ENCODE measurements at regions of chr2 and their contacts with region 1.

Region 1: DNA sequence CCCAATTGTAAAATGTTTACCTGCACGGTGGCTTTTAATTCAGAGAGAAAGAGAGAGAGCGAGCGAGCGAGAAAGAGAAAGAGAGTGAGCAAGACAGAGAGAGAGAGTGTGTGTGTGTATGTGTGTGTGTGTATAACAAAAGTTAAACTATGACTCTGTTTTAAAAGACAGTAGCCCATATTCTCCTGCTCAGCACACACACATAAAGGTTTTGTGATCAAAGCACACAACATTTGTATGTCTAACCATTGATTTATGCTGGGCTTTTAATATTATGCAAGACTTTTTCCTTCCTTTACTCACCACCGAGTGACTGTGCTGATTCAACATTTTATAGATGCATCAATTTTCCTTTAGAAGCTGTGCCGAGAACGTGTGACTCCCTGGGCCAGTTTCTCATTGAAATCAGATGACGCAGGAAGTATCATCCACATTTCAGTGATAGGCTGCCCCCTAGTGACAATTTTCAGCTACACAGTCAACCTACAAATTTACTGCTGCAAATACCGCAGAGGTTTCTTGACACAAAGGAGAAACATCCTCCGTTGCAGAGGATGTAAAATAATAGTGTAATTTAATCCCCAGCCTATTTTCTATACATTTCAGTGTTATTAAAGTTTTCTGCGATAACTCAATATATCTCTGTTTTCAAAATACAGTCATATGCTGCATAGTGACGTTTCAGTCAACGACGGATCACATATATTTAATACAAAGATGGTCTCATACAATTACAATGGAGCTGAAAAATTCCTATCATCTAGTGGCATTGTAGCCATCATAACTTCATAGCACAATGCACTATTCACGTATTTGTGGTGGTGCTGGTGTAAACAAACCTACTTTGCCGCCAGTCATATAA is 165.9 kb upstream of the TANK start:
- DNase-seq: peak; percentile 39 to 85 (median 71)
- ATAC-seq: peak; percentile 96
- H3K4me3 ChIP-seq: no peak overlapping the region
- H3K4me3 Mint-ChIP-seq: peak overlapping the region; percentile 40
- H3K27ac ChIP-seq: no peak overlapping the region
- H3K27ac Mint-ChIP-seq: peak overlapping the region; percentile 15
- H3K4me1 ChIP-seq: no peaks in the 10 kb centered on the region
- H3K4me1 Mint-ChIP-seq: peaks cover 10% of the 10 kb centered on the region
- H3K27me3 ChIP-seq: no peaks in the 10 kb centered on the region
- H3K27me3 Mint-ChIP-seq: no peaks in the 10 kb centered on the region
- CTCF ChIP-seq: peak; percentile 86

Region 2: GRCh38 chr2:160109936-160110673 is 884.3 kb before region 1 on chr2:
- CTCF ChIA-PET with region 1: interaction called, 35 read pairs
- POLR2A ChIA-PET with region 1: no interaction called
- intact Hi-C with region 1: loop called (anchors 1 kb)
- DNase-seq: peak in 8 of 9 experiments; percentile 9 to 72 (median 46)
- ATAC-seq: peak; percentile 64
- H3K4me3 ChIP-seq: no peak overlapping the region
- H3K4me3 Mint-ChIP-seq: no peak overlapping the region
- H3K27ac ChIP-seq: no peak overlapping the region
- H3K27ac Mint-ChIP-seq: no peak overlapping the region
- H3K4me1 ChIP-seq: no peaks in the 10 kb centered on the region
- H3K4me1 Mint-ChIP-seq: no peaks in the 10 kb centered on the region
- H3K27me3 ChIP-seq: no peaks in the 10 kb centered on the region
- H3K27me3 Mint-ChIP-seq: peaks cover 12% of the 10 kb centered on the region
- CTCF ChIP-seq: peak; percentile 86

Region 3: DNA sequence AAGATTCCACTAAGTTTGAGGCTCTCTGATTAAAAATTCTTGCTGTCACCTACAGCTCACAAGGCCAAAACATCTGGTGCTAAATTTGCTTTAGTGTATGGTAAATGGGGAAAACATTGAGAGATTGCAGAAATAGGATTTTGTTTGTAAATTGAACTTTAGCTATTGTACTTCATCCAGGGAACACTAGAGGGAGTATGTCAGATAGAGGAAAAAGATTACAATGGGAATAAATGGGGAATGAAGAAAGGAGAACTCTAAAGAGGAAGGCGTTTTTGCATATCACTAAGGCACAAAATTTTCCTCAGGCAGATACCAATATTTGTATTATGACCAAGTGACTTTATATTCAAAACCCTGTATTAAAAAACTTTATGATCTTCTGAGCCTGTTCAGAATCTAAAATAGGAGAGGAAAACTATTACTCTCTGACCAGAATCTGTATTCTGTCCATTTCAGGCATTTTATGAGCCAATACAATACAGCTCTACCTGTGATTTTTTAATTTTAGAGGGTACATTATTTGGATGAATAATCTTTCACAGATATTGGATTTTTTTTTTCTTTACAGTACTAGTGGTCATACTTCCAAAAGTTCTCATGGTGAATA is 742.0 kb before region 1 on chr2:
- CTCF ChIA-PET with region 1: interaction called, 95 read pairs
- POLR2A ChIA-PET with region 1: interaction called, 4 read pairs
- intact Hi-C with region 1: loop called (anchors 1 kb)
- DNase-seq: peak in 2 of 9 experiments; percentile 36 to 46
- ATAC-seq: no peak
- H3K4me3 ChIP-seq: no peak overlapping the region
- H3K4me3 Mint-ChIP-seq: no peak overlapping the region
- H3K27ac ChIP-seq: no peak overlapping the region
- H3K27ac Mint-ChIP-seq: no peak overlapping the region
- H3K4me1 ChIP-seq: no peaks in the 10 kb centered on the region
- H3K4me1 Mint-ChIP-seq: no peaks in the 10 kb centered on the region
- H3K27me3 ChIP-seq: peaks cover 0 to 3% of the 10 kb centered on the region in 2 experiments
- H3K27me3 Mint-ChIP-seq: peaks cover 4% of the 10 kb centered on the region
- CTCF ChIP-seq: peak; percentile 98

Region 4: GRCh38 chr2:160317181-160318099 is 676.9 kb before region 1 on chr2:
- CTCF ChIA-PET with region 1: interaction called, 26 read pairs
- POLR2A ChIA-PET with region 1: no interaction called
- intact Hi-C with region 1: no loop called
- DNase-seq: no peak
- ATAC-seq: no peak
- H3K4me3 ChIP-seq: no peak overlapping the region
- H3K4me3 Mint-ChIP-seq: no peak overlapping the region
- H3K27ac ChIP-seq: no peak overlapping the region
- H3K27ac Mint-ChIP-seq: no peak overlapping the region
- H3K4me1 ChIP-seq: peaks cover 27% of the 10 kb centered on the region
- H3K4me1 Mint-ChIP-seq: peaks cover 64% of the 10 kb centered on the region
- H3K27me3 ChIP-seq: no peaks in the 10 kb centered on the region
- H3K27me3 Mint-ChIP-seq: no peaks in the 10 kb centered on the region
- CTCF ChIP-seq: no peak

Region 5: DNA sequence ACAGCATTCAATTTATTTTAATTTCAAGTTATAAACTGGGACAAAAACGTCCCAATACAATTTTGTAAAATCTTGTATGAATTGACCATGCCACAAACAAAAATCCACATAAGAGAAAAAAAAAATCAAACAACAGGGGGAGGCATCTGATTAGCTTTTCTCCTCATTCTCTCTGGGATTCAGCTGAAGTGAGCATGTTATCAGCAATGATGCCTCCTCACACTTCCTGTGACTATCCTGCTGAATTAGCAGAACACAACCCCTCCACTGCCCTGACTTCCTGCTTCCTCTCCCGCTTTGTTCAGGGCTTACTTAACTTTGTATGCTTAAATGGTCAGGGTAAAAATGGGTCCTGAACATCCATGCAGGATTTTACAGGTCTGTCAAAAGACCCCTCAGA is 662.1 kb before region 1 on chr2:
- CTCF ChIA-PET with region 1: interaction called, 15 read pairs
- POLR2A ChIA-PET with region 1: no interaction called
- intact Hi-C with region 1: no loop called
- DNase-seq: peak in 3 of 9 experiments; percentile 13 to 55 (median 31)
- ATAC-seq: peak; percentile 42
- H3K4me3 ChIP-seq: no peak overlapping the region
- H3K4me3 Mint-ChIP-seq: peak overlapping the region; percentile 7
- H3K27ac ChIP-seq: no peak overlapping the region
- H3K27ac Mint-ChIP-seq: peak overlapping the region; percentile 77
- H3K4me1 ChIP-seq: peaks cover 74% of the 10 kb centered on the region
- H3K4me1 Mint-ChIP-seq: peaks cover 91% of the 10 kb centered on the region
- H3K27me3 ChIP-seq: no peaks in the 10 kb centered on the region
- H3K27me3 Mint-ChIP-seq: no peaks in the 10 kb centered on the region
- CTCF ChIP-seq: no peak

Region 6: DNA sequence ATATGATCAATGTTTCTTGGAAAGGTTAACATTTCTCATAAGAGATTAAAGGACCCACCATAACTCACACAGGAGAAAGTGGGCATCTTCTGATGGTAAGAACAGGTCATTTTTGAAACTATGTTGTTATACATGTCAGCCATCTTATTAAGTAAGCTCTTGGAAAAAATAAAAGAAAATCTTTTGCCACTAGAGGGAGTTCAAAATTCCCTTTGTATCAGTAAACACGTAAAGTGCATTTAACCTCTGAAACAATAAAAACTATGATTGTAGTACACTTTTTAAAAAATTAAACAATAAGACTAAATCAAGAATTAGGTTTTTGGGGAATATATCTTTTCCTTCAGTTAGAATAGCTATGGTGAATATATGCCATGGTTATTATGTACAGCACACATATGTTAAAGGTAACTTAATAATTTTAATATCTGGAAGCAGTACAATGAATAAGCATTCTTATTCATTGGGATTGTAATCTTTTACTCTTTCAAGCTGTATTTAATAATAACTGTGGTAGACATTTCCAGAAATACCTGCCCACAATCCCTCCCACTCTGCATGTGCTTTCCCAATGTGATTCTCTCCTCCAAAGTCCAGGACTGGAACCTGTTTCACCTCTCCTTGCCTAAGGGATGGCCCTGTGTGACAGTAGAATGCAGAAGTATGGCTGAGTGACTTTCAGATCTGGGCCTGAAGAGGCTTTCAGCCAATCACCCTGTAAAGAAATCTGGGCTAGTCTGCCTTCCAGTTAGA is 564.9 kb before region 1 on chr2:
- CTCF ChIA-PET with region 1: interaction called, 6 read pairs
- POLR2A ChIA-PET with region 1: no interaction called
- intact Hi-C with region 1: loop called in 1 of 2 experiments (anchors 10 kb)
- DNase-seq: peak in 2 of 9 experiments; percentile 72 to 81
- ATAC-seq: peak; percentile 53
- H3K4me3 ChIP-seq: no peak overlapping the region
- H3K4me3 Mint-ChIP-seq: peak overlapping the region; percentile 26
- H3K27ac ChIP-seq: peak overlapping the region in 1 of 2 experiments; percentile 77
- H3K27ac Mint-ChIP-seq: peak overlapping the region; percentile 92
- H3K4me1 ChIP-seq: peaks cover 42% of the 10 kb centered on the region
- H3K4me1 Mint-ChIP-seq: peaks cover 71% of the 10 kb centered on the region
- H3K27me3 ChIP-seq: no peaks in the 10 kb centered on the region
- H3K27me3 Mint-ChIP-seq: no peaks in the 10 kb centered on the region
- CTCF ChIP-seq: peak; percentile 84

Region 7: DNA sequence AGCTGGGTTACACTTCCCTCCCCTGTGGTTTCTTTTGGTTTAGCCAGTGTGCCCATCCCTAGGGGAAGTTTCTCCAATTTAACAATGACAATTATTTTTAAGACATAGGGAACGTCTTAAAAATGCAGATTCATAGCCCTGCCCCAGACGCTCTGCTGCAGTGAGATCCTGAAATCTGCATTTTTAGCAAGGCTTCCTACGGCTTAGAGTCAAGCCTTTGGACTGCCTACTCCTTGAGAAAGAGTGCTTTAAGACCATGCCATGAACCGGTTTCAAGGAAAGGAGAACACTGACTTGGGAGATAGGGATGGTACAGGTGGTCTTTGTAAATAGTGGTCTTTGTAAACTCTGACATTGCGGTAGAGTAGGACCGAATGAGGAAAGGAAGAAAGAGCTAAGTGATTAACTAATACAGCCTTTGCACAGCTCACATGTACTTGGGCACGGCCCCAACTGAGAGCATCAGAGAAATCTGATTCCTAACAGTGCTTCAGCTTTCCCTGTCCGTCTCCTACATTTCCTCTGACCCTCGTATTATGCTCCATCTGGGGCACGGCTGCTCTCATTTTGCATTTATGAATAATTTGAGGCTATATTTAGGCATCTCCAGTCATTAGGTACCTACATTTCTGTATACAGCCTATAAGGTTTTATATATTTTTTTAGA is 51.8 kb before region 1 on chr2:
- CTCF ChIA-PET with region 1: no interaction called
- POLR2A ChIA-PET with region 1: no interaction called
- intact Hi-C with region 1: no loop called
- DNase-seq: no peak
- ATAC-seq: no peak
- H3K4me3 ChIP-seq: no peak overlapping the region
- H3K4me3 Mint-ChIP-seq: no peak overlapping the region
- H3K27ac ChIP-seq: no peak overlapping the region
- H3K27ac Mint-ChIP-seq: no peak overlapping the region
- H3K4me1 ChIP-seq: peaks cover 6% of the 10 kb centered on the region
- H3K4me1 Mint-ChIP-seq: peaks cover 5% of the 10 kb centered on the region
- H3K27me3 ChIP-seq: no peaks in the 10 kb centered on the region
- H3K27me3 Mint-ChIP-seq: peaks cover 4% of the 10 kb centered on the region
- CTCF ChIP-seq: no peak

Region 8: GRCh38 chr2:161004379-161004778 is 10.0 kb after region 1 on chr2:
- CTCF ChIA-PET with region 1: interaction called, 22 read pairs
- POLR2A ChIA-PET with region 1: no interaction called
- intact Hi-C with region 1: no loop called
- DNase-seq: no peak
- ATAC-seq: no peak
- H3K4me3 ChIP-seq: no peak overlapping the region
- H3K4me3 Mint-ChIP-seq: no peak overlapping the region
- H3K27ac ChIP-seq: no peak overlapping the region
- H3K27ac Mint-ChIP-seq: no peak overlapping the region
- H3K4me1 ChIP-seq: no peaks in the 10 kb centered on the region
- H3K4me1 Mint-ChIP-seq: no peaks in the 10 kb centered on the region
- H3K27me3 ChIP-seq: no peaks in the 10 kb centered on the region
- H3K27me3 Mint-ChIP-seq: peaks cover 19% of the 10 kb centered on the region
- CTCF ChIP-seq: peak; percentile 16

Region 9: GRCh38 chr2:161604901-161605300 is 610.5 kb after region 1 on chr2:
- CTCF ChIA-PET with region 1: no interaction called
- POLR2A ChIA-PET with region 1: no interaction called
- intact Hi-C with region 1: no loop called
- DNase-seq: no peak
- ATAC-seq: no peak
- H3K4me3 ChIP-seq: no peak overlapping the region
- H3K4me3 Mint-ChIP-seq: no peak overlapping the region
- H3K27ac ChIP-seq: no peak overlapping the region
- H3K27ac Mint-ChIP-seq: no peak overlapping the region
- H3K4me1 ChIP-seq: no peaks in the 10 kb centered on the region
- H3K4me1 Mint-ChIP-seq: no peaks in the 10 kb centered on the region
- H3K27me3 ChIP-seq: no peaks in the 10 kb centered on the region
- H3K27me3 Mint-ChIP-seq: peaks cover 12% of the 10 kb centered on the region
- CTCF ChIP-seq: no peak